HEK293 (cell line): ENCODE measurements at regions of chr17 and their contacts with region 1.

Region 1: DNA sequence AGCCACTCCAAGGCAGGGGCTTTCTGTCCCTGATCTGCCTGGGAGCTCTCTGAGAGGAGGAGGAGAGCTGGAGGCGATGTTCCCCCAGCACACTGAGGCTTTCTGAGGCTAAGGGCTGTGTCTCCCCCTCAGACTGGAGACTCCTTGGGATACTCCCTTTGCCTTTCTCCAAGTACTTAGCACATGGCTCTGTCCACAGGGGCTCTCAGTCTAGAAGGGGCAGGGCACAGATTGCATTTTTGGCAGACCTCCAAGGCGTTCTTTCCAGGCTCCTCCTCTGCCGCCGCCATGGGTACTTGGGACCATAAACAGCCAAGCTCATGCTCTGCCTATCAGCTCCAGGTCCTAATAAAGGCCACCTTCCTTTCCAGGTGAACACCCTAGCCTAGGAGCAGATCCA is 1.8 kb upstream of the GIP start:
- H3K4me3 ChIP-seq: no peak overlapping the region
- H3K27ac ChIP-seq: peak overlapping the region; percentile 13; the same call in 1 of the 2 replicates
- H3K4me1 ChIP-seq: peaks cover 15% of the 10 kb centered on the region
- CTCF ChIP-seq: no peak

Region 2: GRCh38 chr17:48954300-48954755 is 15.9 kb before region 1 on chr17:
- CTCF ChIA-PET with region 1: interaction called, 10 read pairs
- POLR2A ChIA-PET with region 1: interaction called, 3 read pairs
- H3K4me3 ChIP-seq: no peak overlapping the region
- H3K27ac ChIP-seq: no peak overlapping the region
- H3K4me1 ChIP-seq: no peaks in the 10 kb centered on the region; the same call in 1 of the 2 replicates
- CTCF ChIP-seq: peak; percentile 73

Region 3: GRCh38 chr17:49063652-49064051 is 93.4 kb after region 1 on chr17:
- CTCF ChIA-PET with region 1: no interaction called
- POLR2A ChIA-PET with region 1: interaction called, 10 read pairs
- H3K4me3 ChIP-seq: no peak overlapping the region
- H3K27ac ChIP-seq: no peak overlapping the region
- H3K4me1 ChIP-seq: peaks cover 6% of the 10 kb centered on the region
- CTCF ChIP-seq: no peak

Region 4: GRCh38 chr17:49180303-49180702 is 210.1 kb after region 1 on chr17:
- CTCF ChIA-PET with region 1: no interaction called
- POLR2A ChIA-PET with region 1: no interaction called
- H3K4me3 ChIP-seq: no peak overlapping the region
- H3K27ac ChIP-seq: no peak overlapping the region
- H3K4me1 ChIP-seq: no peaks in the 10 kb centered on the region
- CTCF ChIP-seq: no peak